HEK293 (cell line): ENCODE measurements at regions of chr10 and their contacts with region 1.

Region 1: GRCh38 chr10:73940634-73941221 is 29.8 kb downstream of the PLAU start:
- H3K4me3 ChIP-seq: no peak overlapping the region
- H3K27ac ChIP-seq: no peak overlapping the region
- H3K4me1 ChIP-seq: no peaks in the 10 kb centered on the region
- CTCF ChIP-seq: 0 out of 2 replicates have a peak, but pooled peaks have one; percentile 20

Region 2: GRCh38 chr10:73848821-73849489 is 91.8 kb before region 1 on chr10:
- CTCF ChIA-PET with region 1: interaction called, 11 read pairs
- POLR2A ChIA-PET with region 1: no interaction called
- H3K4me3 ChIP-seq: no peak overlapping the region
- H3K27ac ChIP-seq: no peak overlapping the region
- H3K4me1 ChIP-seq: no peaks in the 10 kb centered on the region
- CTCF ChIP-seq: peak; percentile 94

Region 3: DNA sequence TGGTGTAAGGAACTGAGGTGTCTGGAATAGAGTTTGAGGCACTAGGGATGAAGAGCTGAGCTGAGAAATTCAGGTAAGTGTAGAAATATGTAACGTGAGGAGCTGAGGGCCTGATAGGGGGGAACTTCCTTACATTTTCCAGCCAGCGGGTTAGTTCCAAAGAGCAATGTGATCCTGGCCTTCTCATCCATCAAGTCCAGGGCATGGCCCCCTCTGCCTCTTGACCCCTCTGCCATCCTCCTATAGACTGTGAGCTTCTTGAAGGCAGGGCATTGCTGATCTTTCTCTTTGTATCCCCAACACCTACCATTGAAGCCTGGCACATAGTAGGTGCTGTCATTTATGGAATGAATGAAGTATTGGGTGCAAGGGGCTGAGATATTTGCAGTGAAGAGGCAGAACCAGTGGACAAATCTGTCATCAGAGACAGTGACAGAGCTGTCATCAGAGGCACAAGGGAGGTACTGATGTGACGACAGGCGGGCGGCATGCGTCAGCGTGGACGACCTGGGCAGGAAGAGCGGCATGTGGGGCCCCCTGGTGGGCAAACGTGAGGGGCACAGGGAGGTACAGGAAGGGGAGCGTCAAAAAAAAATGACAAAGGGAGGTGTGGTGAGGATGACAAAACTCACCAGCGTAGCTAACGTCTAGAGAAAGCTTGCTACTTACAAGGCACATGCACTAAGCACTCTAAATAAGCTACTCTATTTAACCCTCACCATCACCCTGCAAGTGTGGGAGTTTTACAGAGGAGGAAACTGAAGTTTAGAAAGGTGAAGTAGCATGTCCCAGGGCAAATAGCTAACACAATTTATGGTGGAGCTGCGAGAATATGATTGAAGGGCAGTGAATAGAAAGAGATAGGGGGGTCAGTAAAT is 61.2 kb before region 1 on chr10:
- CTCF ChIA-PET with region 1: interaction called, 29 read pairs
- POLR2A ChIA-PET with region 1: no interaction called
- H3K4me3 ChIP-seq: no peak overlapping the region
- H3K27ac ChIP-seq: no peak overlapping the region
- H3K4me1 ChIP-seq: no peaks in the 10 kb centered on the region
- CTCF ChIP-seq: peak; percentile 96

Region 4: GRCh38 chr10:73908853-73909538 is 31.7 kb before region 1 on chr10:
- CTCF ChIA-PET with region 1: interaction called, 12 read pairs
- POLR2A ChIA-PET with region 1: no interaction called
- H3K4me3 ChIP-seq: no peak overlapping the region
- H3K27ac ChIP-seq: no peak overlapping the region
- H3K4me1 ChIP-seq: no peaks in the 10 kb centered on the region
- CTCF ChIP-seq: no peak

Region 5: GRCh38 chr10:73926152-73926764 is 14.5 kb before region 1 on chr10:
- CTCF ChIA-PET with region 1: interaction called, 18 read pairs
- POLR2A ChIA-PET with region 1: no interaction called
- H3K4me3 ChIP-seq: no peak overlapping the region
- H3K27ac ChIP-seq: no peak overlapping the region
- H3K4me1 ChIP-seq: no peaks in the 10 kb centered on the region
- CTCF ChIP-seq: no peak

Region 6: DNA sequence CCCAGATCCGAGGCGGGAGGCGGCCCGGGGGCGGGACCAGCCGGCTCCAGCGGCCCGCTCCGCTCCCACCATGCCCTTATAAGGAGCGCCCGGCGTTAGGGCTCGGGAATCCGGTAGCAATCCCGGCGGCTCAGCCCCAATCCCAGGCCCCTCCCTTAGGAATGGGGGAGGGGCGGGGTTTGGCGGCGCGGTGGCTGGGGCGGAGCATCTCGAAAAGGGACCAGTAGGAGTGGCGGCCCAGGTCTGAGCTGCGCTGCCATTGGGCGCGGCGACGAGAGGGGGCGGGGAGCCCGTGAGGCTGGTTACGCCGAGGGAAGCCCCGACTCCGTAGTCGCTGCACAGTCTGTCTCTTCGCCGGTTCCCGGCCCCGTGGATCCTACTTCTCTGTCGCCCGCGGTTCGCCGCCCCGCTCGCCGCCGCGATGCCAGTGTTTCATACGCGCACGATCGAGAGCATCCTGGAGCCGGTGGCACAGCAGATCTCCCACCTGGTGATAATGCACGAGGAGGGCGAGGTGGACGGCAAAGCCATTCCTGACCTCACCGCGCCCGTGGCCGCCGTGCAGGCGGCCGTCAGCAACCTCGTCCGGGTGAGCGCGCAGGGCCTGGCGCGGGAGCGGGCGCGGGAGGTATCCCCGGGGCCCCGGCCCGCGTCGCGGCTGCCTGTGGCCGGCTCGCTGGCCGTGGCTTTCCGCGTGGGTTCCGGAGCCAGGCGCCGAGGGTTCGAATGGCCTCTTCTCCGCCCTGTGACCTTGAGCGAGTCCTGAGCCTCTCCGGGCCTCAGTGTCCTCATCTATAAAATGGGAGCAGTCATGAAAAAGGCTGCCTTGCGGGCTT is 57.3 kb after region 1 on chr10 and contains the start of gene VCL:
- CTCF ChIA-PET with region 1: interaction called, 10 read pairs
- POLR2A ChIA-PET with region 1: interaction called, 3 read pairs
- H3K4me3 ChIP-seq: peak within 1 kb of the TSS; percentile 95
- H3K27ac ChIP-seq: peak within 1 kb of the TSS; percentile 83
- H3K4me1 ChIP-seq: peaks cover 4% of the 10 kb centered on the region; the same call in 1 of the 2 replicates
- CTCF ChIP-seq: no peak